SK-N-SH (cell line): ENCODE measurements at regions of chr1 and their contacts with region 1.

Region 1: DNA sequence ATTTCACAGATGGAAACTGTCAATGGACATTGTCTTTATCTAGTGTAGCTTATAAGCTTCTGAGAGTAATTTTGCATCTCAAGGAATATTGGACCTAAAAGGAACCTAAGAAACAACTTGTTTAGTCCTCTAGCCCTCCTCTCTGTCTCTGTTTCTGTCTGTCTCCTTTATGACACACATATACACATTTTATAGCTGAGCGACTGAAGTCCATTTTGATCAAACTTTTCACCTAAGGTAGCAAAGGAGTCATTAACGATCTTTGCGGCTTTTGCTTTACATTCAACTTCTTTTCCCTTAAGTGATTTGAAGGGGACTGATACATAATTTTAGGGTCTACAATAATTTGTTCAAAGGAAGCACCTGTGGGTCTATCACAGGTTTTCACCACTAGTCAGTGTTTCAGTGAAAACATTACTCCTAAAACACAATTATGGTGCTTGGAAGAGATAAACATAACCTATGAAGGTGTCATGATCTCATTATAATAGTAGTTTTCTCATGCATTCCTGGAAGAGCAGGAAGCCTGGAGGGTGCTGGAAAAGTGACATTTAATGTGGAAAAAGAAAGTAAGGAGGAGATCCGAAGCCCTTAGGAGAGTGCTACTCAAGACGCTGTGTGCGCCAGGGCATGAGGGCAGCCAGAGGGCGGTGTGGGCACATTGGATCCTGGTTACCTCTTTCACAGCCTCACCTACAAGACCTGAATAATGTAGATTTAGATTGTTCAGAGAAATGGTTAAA is 248.6 kb downstream of the DNM3 start:
- DNase-seq: peak; percentile 42
- H3K4me3 ChIP-seq: no peak overlapping the region
- H3K27ac ChIP-seq: no peak overlapping the region
- H3K4me1 ChIP-seq: no peaks in the 10 kb centered on the region; a peak in 1 of 4 replicates
- H3K27me3 ChIP-seq: no peaks in the 10 kb centered on the region
- CTCF ChIP-seq: peak; percentile 71
- EP300 ChIP-seq: no peak
- RAD21 ChIP-seq: peak; percentile 86

Region 2: DNA sequence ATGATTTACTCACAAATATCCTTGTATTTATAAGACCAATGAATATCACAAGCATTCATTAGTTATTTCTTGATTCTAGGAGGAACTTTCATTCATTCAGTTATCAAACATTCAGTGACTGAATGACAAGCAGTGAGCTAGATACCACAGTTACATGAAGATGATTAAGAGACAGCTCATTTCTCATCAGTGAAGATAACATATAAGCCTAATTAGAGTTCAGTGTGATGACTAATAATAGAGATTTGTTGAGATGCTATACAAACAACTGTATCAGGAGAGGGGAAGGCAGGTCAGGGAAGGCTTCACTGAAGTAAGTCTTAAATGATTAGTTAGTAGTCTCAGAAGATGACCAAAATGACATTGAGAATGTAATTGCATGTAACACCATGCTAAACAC is 316.0 kb after region 1 on chr1:
- CTCF ChIA-PET with region 1: interaction called, 31 read pairs
- POLR2A ChIA-PET with region 1: no interaction called
- DNase-seq: no peak
- H3K4me3 ChIP-seq: no peak overlapping the region
- H3K27ac ChIP-seq: no peak overlapping the region
- H3K4me1 ChIP-seq: no peaks in the 10 kb centered on the region; a peak in 1 of 4 replicates
- H3K27me3 ChIP-seq: no peaks in the 10 kb centered on the region
- CTCF ChIP-seq: no peak
- EP300 ChIP-seq: no peak
- RAD21 ChIP-seq: no peak